Mammary epithelial cell (primary cell): ENCODE measurements at regions of chr2 and their contacts with region 1.

Region 1: DNA sequence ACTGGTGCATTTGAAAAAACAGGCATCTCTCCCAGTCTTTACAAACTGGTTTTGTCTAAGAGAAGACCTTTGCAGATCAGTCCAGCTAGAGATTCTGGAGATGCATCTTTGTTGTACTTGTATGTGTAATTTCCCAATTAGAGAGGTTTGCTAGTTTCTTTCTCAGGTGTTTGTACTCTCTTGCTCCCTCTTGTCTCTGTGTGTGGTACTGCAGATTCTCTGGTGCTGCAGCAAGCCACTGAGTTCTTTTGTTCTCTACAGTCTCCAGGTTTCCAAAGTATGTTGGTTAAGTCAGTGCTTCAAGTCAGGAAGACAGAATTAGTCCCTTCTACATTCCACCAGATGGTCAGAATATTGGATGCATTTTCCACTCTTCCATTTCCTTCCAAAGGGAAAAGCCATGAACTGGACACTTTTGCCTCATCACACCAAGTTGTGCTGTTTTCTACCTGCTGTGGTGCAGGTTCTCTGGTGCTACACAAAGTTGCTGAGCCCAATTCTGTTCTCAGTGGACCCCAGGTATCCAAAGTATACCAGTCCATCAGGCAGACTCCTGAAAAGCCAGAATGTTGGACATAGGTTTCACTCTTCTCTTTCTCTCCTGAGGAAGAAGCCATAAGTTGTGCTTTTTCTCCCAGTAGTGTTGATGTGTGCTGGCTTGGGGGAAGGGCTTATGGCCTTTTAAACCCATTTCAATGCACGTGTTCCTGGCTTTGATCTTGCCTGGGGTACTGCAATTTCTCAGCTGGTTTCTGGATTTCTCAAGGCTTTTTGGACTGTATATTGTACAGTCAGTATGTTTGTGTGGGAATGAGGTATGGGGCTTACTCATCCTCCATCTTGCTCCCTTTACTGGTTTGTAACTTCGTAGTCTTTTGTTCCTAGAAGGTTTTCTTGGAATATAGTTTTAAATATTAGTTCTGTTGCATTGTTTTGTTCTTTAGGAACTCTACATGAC is 29.8 kb downstream of the EPC2 start:
- DNase-seq: peak; percentile 30
- H3K4me3 ChIP-seq: no peak overlapping the region
- H3K27ac ChIP-seq: no peak overlapping the region
- H3K4me1 ChIP-seq: peaks cover 13% of the 10 kb centered on the region
- H3K27me3 ChIP-seq: no peaks in the 10 kb centered on the region
- CTCF ChIP-seq: peak; percentile 68 to 70

Region 2: DNA sequence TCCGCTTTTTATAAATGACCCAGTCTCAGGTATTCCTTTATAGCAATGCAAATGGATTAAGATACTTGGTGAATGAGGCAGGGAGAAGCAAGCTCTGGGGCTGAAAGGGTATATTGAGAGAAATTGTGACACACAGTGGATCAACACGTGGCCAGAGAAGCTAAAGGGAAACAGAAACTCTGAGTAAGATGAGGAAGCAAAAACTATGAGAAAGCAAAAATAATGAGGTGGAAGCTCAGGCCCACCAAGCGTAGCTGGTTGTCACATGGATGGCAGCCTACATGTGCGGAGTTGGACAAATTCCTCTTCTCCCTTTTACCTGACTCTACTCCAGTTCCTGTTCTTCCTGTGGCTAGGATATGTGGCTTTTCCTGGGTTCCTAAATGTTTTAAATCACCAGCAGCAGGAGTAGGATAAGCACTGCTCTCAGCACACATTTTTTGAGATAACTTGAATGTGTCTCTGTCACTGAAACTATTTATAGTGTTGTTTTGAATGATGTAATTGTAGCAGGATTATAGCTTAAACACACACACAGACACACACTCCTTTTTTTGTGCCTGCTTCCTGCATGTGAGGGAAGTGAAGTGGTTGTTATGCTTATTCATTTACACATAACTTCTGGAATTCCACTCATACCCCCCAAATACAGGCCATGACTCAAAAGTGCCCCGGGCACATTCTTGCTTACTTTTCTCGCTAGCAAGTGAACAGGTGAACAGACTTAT is 59.9 kb before region 1 on chr2:
- CTCF ChIA-PET with region 1: no interaction called
- dilution Hi-C with region 1: no loop called
- in situ Hi-C with region 1: no loop called
- intact Hi-C with region 1: no loop called
- DNase-seq: peak; percentile 66
- H3K4me3 ChIP-seq: no peak overlapping the region
- H3K27ac ChIP-seq: peak overlapping the region; percentile 11
- H3K4me1 ChIP-seq: peaks cover 21% of the 10 kb centered on the region
- H3K27me3 ChIP-seq: no peaks in the 10 kb centered on the region
- CTCF ChIP-seq: no peak

Region 3: GRCh38 chr2:148627224-148627623 is 47.1 kb before region 1 on chr2:
- CTCF ChIA-PET with region 1: no interaction called
- dilution Hi-C with region 1: no loop called
- in situ Hi-C with region 1: no loop called
- intact Hi-C with region 1: no loop called
- DNase-seq: no peak
- H3K4me3 ChIP-seq: no peak overlapping the region
- H3K27ac ChIP-seq: no peak overlapping the region
- H3K4me1 ChIP-seq: no peaks in the 10 kb centered on the region
- H3K27me3 ChIP-seq: no peaks in the 10 kb centered on the region
- CTCF ChIP-seq: no peak

Region 4: DNA sequence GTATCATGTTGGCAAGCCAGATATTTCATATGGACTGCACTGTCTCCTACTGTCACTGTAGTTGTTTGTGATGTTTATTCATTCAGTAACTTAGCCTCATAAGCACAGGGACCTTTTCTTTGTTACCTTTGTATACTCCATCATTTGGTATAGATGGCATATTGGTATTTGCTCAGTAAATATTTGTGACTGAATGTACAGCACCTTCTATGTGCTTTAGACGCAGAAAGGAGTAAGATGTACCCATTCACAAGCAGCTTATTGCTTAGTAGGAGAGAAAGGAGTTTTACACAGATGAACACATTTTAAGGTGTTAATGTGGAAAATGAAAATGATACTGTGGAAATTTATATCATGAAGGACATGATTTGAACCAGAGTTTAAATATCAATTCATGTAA is 17.8 kb before region 1 on chr2:
- CTCF ChIA-PET with region 1: interaction called, 15 read pairs
- dilution Hi-C with region 1: no loop called
- in situ Hi-C with region 1: no loop called
- intact Hi-C with region 1: no loop called
- DNase-seq: no peak
- H3K4me3 ChIP-seq: no peak overlapping the region
- H3K27ac ChIP-seq: no peak overlapping the region
- H3K4me1 ChIP-seq: peaks cover 13% of the 10 kb centered on the region
- H3K27me3 ChIP-seq: no peaks in the 10 kb centered on the region
- CTCF ChIP-seq: no peak